ENCODE measurements at regions of chr1 and their contacts with region 1.

Region 1: GRCh38 chr1:51519048-51519864 is at the start of gene EPS15:
- DNase-seq: peak; percentile 93 to 97
- ATAC-seq: peak; percentile 92
- H3K4me3 ChIP-seq: peak within 1 kb of the TSS; percentile 77 to 89
- H3K27ac ChIP-seq: peak within 1 kb of the TSS; percentile 60 to 68
- H3K4me1 ChIP-seq: peaks cover 0 to 3% of the 10 kb centered on the region in 2 donors
- H3K27me3 ChIP-seq: no peaks in the 10 kb centered on the region
- total RNA-seq, gene EPS15: 101 to 121 TPM

Region 2: GRCh38 chr1:51296383-51297357 is 222.6 kb before region 1 on chr1:
- intact Hi-C with region 1: no loop called
- DNase-seq: peak; percentile 87 to 95
- ATAC-seq: peak; percentile 91
- H3K4me3 ChIP-seq: peak overlapping the region; percentile 14 to 63
- H3K27ac ChIP-seq: no peak overlapping the region
- H3K4me1 ChIP-seq: no peaks in the 10 kb centered on the region
- H3K27me3 ChIP-seq: no peaks in the 10 kb centered on the region

Region 3: GRCh38 chr1:51445351-51446090 is 73.7 kb before region 1 on chr1:
- intact Hi-C with region 1: loop called in 1 of 2 experiments (anchors 10 kb)
- DNase-seq: no peak
- ATAC-seq: no peak
- H3K4me3 ChIP-seq: no peak overlapping the region
- H3K27ac ChIP-seq: no peak overlapping the region
- H3K4me1 ChIP-seq: no peaks in the 10 kb centered on the region
- H3K27me3 ChIP-seq: no peaks in the 10 kb centered on the region

Region 4: DNA sequence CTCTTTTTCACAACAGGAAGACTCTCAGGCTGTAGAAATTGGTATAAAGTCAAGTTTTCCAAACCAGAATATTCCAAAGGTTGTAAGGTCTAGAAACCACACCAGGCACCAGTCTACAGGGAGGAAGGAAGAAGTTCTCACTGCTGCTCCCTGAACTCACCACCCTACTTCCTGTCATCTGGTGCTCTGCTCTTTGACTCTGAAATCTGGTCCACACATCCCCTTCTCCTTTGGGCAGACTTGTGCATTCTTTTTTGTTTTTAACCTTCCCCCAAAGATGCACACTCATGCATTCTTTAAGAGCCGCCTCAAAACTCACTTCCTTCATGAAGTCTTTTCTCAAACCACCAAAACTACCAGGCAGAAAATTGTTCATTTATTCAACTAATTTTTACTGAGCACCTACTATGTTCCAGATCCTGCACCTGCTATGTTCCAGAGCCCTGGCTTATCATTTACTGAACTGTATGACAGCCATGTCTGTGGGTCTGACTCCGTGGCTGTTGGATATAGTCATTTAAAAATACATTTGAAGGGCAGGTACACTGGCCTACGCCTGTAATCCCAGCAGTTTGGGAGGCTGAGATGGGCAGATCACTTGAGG is 29.9 kb after region 1 on chr1:
- intact Hi-C with region 1: no loop called
- DNase-seq: no peak
- ATAC-seq: no peak
- H3K4me3 ChIP-seq: no peak overlapping the region
- H3K27ac ChIP-seq: no peak overlapping the region
- H3K4me1 ChIP-seq: no peaks in the 10 kb centered on the region
- H3K27me3 ChIP-seq: no peaks in the 10 kb centered on the region

Measured in aorta (tissue), 5 donors.